ENCODE measurements at regions of chr9 and their contacts with region 1.

Region 1: DNA sequence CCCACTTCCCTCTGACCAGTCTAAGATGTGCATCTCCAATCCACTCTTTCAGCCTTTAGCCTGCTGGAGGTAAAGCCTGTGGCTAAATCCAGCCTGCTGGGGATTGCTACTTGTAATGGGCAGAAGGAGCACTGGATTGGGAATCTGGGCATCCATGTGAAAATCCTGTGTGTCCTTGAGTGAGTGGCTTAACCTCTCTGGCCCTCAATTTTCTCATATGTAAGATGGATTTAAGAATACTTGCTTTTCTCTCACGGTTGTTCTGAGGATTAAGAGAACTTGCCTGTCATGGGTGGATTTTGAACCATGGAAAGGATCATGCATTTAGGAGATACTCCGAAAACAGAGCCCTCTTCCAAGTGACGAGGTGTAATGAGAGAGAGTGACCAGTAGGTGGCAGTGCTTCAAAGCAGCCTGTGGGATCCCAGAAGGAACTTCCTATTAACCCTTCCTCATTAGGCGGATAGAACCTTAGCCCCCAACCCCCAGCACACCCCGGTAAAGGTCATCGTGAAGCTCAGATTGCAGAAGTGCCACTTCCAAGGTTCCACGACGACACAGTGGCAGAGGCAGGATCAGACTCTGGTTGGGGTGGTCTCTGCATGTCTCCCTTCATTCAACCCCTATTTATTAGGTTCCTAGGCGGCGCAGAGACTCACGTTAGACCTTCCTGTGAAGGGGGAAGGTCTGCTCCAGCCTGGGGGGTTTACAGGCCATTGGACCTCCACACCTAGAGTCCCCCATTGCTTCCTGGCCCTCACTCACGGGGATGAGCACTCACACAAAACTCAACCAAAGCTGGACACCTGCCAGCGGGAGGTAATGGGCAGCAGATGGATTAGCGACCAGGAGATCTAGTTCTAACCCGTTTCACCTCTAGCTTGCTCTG is 68.7 kb upstream of the ZNF618 start:
- DNase-seq: peak; percentile 75
- H3K4me3 ChIP-seq: peak overlapping the region in 2 of 4 donors; percentile 27 to 35
- H3K27ac ChIP-seq: no peak overlapping the region
- H3K4me1 ChIP-seq: peaks cover 0 to 7% (median 5%) of the 10 kb centered on the region in 4 donors
- H3K27me3 ChIP-seq: no peaks in the 10 kb centered on the region
- CTCF ChIP-seq: peak; percentile 72 to 90 (median 80)
- EP300 ChIP-seq: no peak
- POLR2A ChIP-seq: no peak

Region 2: DNA sequence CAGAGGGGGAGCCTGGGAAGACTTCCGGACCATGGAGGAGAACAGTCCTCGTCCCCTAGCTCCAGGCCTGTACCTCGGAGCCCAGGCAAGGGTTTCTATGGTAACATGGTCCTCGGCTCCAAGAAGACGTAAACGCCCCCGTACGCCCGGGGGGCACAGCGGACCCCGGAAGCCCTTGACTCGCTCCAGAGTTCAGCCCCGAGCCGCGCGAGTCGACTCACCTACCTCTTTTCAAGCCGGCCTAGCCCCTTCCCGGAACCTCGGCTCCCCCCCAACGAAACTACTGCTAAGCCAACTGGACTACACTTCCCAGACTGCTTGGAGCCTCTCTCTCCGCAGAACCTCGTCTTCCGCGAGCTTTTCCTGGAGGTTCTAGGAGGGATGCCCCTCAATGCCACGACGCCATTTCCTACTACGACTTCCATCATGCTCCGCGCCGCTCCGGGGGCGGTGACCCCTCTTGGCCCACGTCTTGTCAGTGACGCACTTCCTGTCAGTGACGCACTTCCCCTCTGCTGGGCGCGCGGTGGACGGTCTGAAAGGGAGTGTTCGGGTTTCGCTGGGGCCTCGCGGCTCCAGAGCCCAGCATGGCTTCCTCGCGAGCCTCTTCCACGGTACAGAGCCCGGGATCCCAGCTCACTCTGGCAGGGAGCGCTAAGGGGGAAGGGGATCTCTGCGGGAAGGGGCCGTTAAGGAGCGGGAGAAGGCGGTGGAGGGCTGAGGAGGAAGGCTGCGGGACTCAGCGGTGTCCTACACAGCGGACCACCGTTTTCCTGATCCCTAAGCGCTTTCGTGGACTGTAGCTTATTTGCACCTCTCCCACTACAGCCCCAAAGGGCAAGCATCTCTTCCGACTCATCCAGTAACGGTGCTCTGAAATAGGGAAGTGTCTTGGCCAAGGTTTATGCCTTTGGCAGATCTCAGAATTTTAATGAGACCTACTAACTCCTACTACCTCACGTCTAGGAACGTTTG is 532.0 kb before region 1 on chr9 and contains the starts of genes CDC26 and PRPF4:
- intact Hi-C with region 1: no loop called
- DNase-seq: peak; percentile 99
- H3K4me3 ChIP-seq: peak within 1 kb of the TSS; percentile 75 to 89 (median 82)
- H3K27ac ChIP-seq: peak within 1 kb of the TSS; percentile 94 to 96 (median 94)
- H3K4me1 ChIP-seq: peaks cover 0 to 36% (median 20%) of the 10 kb centered on the region in 4 donors
- H3K27me3 ChIP-seq: no peaks in the 10 kb centered on the region
- CTCF ChIP-seq: no peak
- EP300 ChIP-seq: peak in 1 of 4 donors; percentile 91
- POLR2A ChIP-seq: peak; percentile 97 to 98
- total RNA-seq, gene CDC26: 57.1 to 71.7 (median 66.2) TPM
- total RNA-seq, gene PRPF4: 12.7 to 21.4 (median 14.1) TPM

Region 3: GRCh38 chr9:113876151-113876992 is 69.0 kb after region 1 on chr9 and contains the start of gene ZNF618:
- intact Hi-C with region 1: loop called (anchors 5 kb)
- DNase-seq: no peak
- H3K4me3 ChIP-seq: peak within 1 kb of the TSS; percentile 82 to 99 (median 95)
- H3K27ac ChIP-seq: peak within 1 kb of the TSS; percentile 72 to 81 (median 78)
- H3K4me1 ChIP-seq: peaks cover 0 to 12% (median 5%) of the 10 kb centered on the region in 4 donors
- H3K27me3 ChIP-seq: no peaks in the 10 kb centered on the region
- CTCF ChIP-seq: peak in 1 of 4 experiments; percentile 51
- EP300 ChIP-seq: no peak
- POLR2A ChIP-seq: no peak
- total RNA-seq, gene ZNF618: 2.0 to 8.0 (median 2.6) TPM

Region 4: GRCh38 chr9:113963017-113963620 is 155.7 kb after region 1 on chr9:
- intact Hi-C with region 1: loop called (anchors 5 kb)
- DNase-seq: no peak
- H3K4me3 ChIP-seq: no peak overlapping the region
- H3K27ac ChIP-seq: no peak overlapping the region
- H3K4me1 ChIP-seq: peaks cover 0 to 2% (median 0%) of the 10 kb centered on the region in 4 donors
- H3K27me3 ChIP-seq: no peaks in the 10 kb centered on the region
- CTCF ChIP-seq: peak in 3 of 4 experiments; percentile 22 to 43 (median 28)
- EP300 ChIP-seq: no peak
- POLR2A ChIP-seq: no peak

Region 5: DNA sequence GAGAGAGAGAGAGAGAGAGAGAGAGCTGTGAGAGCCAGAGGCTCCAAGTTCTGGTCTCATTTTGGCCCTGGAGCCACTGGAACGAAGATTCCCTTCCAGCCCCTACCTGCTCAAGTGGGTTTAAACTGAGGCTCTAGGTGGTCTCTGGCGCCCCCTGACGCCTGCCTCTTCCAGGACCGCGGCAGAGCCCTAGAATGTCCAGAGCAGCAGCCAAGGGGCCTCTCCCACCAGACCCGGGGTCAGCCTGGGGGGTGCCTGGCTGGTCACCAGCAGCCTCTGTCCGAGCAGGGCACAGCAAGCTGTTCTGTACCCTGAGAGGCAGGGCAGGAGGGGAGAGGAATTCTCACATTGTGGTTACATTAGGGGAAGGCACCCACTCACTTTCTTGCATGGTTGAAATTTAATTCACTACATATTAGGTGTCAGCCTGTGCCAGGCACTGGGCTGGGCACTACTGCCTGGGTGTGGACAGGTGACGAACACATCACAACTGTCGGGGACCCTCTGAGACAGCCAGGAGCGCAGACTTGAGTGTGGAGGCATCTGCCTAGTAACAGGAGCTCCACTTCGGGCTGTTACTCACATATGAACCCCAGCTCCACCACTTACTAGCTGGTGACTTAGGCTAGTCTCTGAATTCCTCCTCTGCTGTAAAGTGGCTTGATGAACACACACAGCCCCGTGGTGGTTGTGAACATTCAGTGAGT is 226.1 kb after region 1 on chr9:
- intact Hi-C with region 1: loop called (anchors 5 kb)
- DNase-seq: peak; percentile 59
- H3K4me3 ChIP-seq: no peak overlapping the region
- H3K27ac ChIP-seq: no peak overlapping the region
- H3K4me1 ChIP-seq: no peaks in the 10 kb centered on the region
- H3K27me3 ChIP-seq: no peaks in the 10 kb centered on the region
- CTCF ChIP-seq: peak in 3 of 4 experiments; percentile 18 to 46 (median 41)
- EP300 ChIP-seq: no peak
- POLR2A ChIP-seq: no peak

Measured in sigmoid colon (tissue), 7 donors.